AG04449 (cell line): ENCODE measurements at regions of chr17 and their contacts with region 1.

Region 1: DNA sequence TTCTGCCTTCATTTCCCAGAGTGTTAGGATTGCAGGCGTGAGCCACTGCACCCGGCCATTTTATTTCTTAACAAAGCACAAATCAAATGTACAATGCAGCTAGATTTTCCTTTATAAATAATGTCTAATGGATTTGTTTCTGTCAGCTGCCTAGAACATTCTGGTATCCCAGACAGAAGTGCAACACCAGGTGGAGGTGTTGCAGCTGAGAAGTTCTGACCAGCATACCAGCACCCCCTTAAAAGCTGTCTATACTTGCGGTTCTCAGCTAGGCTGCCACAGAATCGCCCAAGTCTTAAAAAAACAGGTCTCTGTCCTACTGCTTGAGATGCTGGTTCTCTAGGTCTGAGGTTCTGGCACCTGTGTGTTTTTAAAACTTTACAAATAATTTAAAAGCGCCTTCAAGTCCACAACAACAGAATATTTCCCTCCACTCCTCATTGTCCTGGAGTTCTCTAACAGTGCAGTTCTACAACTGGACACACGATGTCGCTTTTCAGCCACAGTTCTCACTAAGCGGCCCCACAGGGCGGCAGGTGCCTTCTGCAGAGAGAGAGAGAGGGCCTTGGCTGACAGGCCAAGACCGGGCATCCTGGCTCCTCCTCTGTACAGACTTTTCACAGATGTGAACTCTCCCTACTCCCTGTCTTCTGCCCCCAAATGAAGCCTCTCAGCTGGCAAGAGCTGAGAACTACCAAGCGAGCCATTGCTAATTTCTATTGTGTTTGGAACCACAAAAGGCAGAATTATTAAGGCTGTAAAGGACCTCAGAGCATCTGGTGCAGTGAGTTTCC is 32.6 kb upstream of the MEOX1 start:
- DNase-seq: no peak
- H3K4me3 ChIP-seq: no peak overlapping the region
- CTCF ChIP-seq: peak; percentile 78

Region 2: DNA sequence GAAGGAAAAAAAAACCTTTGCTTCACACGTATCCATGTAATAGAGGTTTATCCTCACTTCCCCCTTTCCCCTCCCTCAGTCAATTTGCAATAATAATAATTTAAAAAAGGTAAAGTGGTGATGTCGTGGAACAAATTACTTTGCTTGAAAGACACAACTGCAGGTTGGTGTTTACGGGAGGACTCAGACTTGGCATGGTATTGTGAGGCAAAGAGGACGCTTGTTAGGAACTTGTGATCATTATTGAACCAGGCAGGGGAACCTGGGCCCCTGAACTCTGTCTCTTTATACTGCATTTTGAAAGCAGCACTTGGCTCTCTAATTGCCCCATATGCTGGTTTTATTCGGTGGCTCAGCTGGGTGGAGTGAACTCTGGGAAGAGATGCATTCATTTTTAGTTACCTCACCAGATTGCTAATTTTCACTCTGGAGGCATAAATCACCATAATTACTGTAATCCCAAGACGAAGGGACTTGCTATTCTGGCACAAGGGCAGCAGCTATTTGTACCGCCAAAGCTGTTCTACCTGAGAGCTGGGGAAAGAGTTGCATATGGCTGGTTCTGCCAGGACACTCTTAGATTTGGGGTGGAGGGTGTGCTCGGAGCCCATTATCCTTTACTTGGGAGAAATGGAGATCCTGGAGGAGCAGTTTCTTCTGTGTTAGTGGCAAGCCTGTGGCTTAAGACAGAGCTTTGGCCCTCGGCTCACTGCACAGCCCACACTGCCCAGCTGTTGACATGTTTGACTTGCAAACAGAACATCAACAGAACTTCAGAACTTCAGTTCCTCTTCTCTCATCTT is 216.2 kb before region 1 on chr17:
- CTCF ChIA-PET with region 1: no interaction called
- POLR2A ChIA-PET with region 1: no interaction called
- DNase-seq: no peak
- H3K4me3 ChIP-seq: no peak overlapping the region
- CTCF ChIP-seq: no peak

Region 3: GRCh38 chr17:43554857-43555256 is 139.4 kb before region 1 on chr17:
- CTCF ChIA-PET with region 1: no interaction called
- POLR2A ChIA-PET with region 1: no interaction called
- DNase-seq: no peak
- H3K4me3 ChIP-seq: no peak overlapping the region
- CTCF ChIP-seq: no peak

Region 4: DNA sequence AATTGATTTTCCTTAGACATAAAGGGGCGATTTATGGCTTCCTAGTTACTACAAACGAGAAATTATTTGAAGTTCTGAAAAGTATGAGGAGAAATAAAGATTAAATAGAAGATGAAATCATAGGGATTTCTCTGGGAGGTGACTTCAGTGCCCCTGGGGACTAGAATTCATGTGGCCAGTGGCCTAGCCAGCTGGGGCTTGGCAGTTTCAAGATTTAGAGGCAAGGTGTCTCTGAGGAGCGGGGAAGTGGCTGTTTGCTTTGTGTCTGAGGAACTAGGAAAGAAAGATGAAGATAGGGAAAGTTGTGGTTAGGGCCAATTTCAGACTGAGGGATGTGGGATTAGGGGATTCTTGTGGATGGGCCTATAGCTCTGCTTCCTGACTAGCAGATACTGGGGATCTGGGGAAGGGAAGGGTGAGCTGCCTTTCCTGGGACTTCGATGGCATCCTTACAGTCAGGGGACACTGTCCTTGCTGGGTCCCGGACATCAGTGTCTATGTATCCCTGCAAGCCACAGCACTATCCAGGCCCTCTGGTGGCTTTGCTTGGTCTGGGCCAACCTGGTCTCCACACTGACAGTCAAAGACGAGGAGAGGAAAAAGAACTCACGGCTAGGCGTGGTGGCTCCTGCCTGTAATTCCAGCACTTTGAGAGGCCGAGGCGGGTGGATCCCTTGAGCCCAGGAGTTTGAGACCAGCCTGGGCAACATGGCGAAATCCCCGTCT is 10.2 kb before region 1 on chr17:
- CTCF ChIA-PET with region 1: interaction called, 40 read pairs
- POLR2A ChIA-PET with region 1: no interaction called
- DNase-seq: no peak
- H3K4me3 ChIP-seq: no peak overlapping the region
- CTCF ChIP-seq: no peak

Region 5: DNA sequence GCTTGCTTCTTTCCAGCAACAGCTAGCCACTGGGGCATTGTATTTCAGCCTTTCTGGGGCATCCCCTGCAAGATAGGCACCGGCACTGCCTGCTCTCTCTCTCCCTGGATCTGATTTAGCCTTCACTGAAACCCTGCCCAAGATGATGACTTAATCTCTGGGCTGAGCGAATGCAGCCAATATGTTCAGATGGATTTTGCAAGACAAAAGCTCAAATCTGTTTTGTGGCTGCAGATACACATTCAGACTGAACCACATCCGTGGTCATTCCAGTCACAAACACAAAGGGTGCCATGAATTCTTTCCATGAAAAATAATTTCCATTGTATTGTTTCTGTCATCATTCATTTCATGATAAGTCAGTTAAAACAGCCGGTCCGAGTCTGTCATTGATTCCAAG is 40.1 kb after region 1 on chr17:
- CTCF ChIA-PET with region 1: interaction called, 47 read pairs
- POLR2A ChIA-PET with region 1: no interaction called
- DNase-seq: no peak
- H3K4me3 ChIP-seq: no peak overlapping the region
- CTCF ChIP-seq: no peak

Region 6: DNA sequence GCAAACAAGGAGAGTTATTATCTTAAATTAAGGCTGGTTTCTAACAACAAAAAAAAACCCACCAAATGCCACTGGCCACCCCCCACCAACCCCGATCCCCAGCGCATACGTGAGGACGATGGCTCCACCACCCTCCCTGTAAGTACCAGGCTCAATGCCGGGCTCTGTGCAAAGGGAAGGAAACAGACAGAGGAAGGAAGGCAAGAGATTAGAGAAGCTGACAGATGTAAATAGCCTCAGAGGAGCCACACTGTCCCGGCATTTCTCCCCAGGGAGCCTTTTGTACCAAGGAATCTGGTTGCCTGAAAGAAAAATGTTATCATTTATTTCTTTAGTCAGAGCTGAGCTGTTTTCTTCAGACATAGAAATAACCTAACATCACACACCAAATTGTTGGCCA is 51.3 kb after region 1 on chr17:
- CTCF ChIA-PET with region 1: interaction called, 1,463 read pairs
- POLR2A ChIA-PET with region 1: no interaction called
- DNase-seq: no peak
- H3K4me3 ChIP-seq: no peak overlapping the region
- CTCF ChIP-seq: no peak

Region 7: GRCh38 chr17:43778337-43779144 is 84.3 kb after region 1 on chr17 and contains the start of gene DUSP3:
- CTCF ChIA-PET with region 1: interaction called, 33 read pairs
- POLR2A ChIA-PET with region 1: no interaction called
- DNase-seq: peak; percentile 40
- H3K4me3 ChIP-seq: peak within 1 kb of the TSS; percentile 95
- CTCF ChIP-seq: no peak